ENCODE measurements at regions of chr12 and their contacts with region 1.

Region 1: GRCh38 chr12:6567112-6567670 is 900 bp downstream of the NOP2 start:
- DNase-seq: no peak
- ATAC-seq: no peak

Region 2: GRCh38 chr12:6392504-6393077 is 174.6 kb before region 1 on chr12:
- intact Hi-C with region 1: no loop called
- DNase-seq: no peak
- ATAC-seq: peak; percentile 66

Region 3: GRCh38 chr12:6607751-6608591 is 40.8 kb after region 1 on chr12:
- intact Hi-C with region 1: loop called (anchors 5 kb)
- DNase-seq: no peak
- ATAC-seq: peak; percentile 9

Measured in Right ventricle myocardium inferior (tissue), 1 donor.